CD14-positive monocyte (primary cell): ENCODE measurements at regions of chr6 and their contacts with region 1.

Region 1: DNA sequence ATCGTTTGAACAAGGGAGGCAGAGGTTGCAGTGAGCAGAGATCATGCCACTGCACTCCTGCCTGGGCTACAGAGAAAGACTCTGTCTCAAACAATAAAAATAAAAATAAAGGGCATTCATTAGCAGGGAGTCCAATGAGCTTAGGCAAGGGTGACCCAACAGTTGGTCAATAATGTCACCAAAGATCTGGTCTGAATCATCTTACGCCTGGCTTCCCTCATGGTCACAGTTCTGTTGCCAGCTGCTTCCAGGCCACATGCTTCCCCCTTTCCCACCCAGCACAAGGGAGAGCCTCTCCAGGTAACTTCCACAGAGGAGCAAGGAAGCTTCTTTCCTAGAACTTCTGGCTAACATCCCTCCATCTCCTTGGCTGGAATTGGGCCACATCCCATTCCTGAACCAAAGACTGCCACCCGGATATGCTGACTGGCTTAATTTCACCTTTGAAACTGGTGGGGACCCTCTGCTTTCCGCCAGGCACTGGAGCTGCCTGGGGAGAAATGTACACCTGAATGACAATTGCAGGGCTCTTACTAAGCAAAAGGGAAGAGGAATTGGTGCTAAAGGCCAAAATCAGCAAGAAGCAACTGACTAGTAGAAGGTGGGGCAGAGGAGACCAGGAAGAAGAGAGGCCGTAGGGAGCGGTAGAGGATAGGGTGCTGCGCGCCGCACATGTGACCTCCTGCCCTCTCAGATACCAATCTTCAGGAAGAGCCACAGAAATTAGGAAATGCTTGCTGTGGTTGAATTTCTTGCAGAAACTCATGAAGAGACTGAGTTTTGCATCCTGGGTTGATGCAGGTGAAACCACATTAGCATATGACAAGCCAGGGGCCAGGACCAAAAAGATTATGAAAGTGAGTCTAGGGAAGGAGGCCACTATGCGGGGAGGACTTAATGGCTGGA is 8.3 kb upstream of the SCML4 start:
- DNase-seq: peak in 2 of 3 donors; percentile 20 to 54
- H3K4me3 ChIP-seq: no peak overlapping the region
- H3K4me3 Mint-ChIP-seq: peak overlapping the region in 1 of 2 donors; percentile 28
- H3K27ac ChIP-seq: no peak overlapping the region
- H3K27ac Mint-ChIP-seq: peak overlapping the region in 2 of 7 donors; percentile 30 to 34
- H3K4me1 ChIP-seq: peaks cover 10 to 13% of the 10 kb centered on the region in 2 donors
- H3K4me1 Mint-ChIP-seq: peaks cover 12% of the 10 kb centered on the region
- H3K27me3 ChIP-seq: no peaks in the 10 kb centered on the region
- H3K27me3 Mint-ChIP-seq: peaks cover 1 to 7% (median 6%) of the 10 kb centered on the region in 3 donors
- CTCF ChIP-seq: no peak

Region 2: GRCh38 chr6:107489636-107490565 is 342.5 kb before region 1 on chr6 and contains the start of gene SOBP:
- intact Hi-C with region 1: loop called in 1 of 2 experiments (anchors 5 kb)
- DNase-seq: peak in 1 of 3 donors; percentile 12
- H3K4me3 ChIP-seq: peak within 1 kb of the TSS; percentile 31 to 77 (median 37)
- H3K4me3 Mint-ChIP-seq: peak within 1 kb of the TSS; percentile 85 to 99
- H3K27ac ChIP-seq: no peak within 1 kb of the TSS
- H3K27ac Mint-ChIP-seq: no peak within 1 kb of the TSS
- H3K4me1 ChIP-seq: peaks cover 25 to 31% of the 10 kb centered on the region in 2 donors
- H3K4me1 Mint-ChIP-seq: peaks cover 27% of the 10 kb centered on the region
- H3K27me3 ChIP-seq: peaks cover 81 to 93% of the 10 kb centered on the region in 2 donors
- H3K27me3 Mint-ChIP-seq: peaks cover 46 to 51% (median 48%) of the 10 kb centered on the region in 3 donors
- CTCF ChIP-seq: no peak
- polyA plus RNA-seq, gene SOBP: not detected